Ascending aorta (tissue), 2 donors: ENCODE measurements at regions of chr1 and their contacts with region 1.

Region 1: DNA sequence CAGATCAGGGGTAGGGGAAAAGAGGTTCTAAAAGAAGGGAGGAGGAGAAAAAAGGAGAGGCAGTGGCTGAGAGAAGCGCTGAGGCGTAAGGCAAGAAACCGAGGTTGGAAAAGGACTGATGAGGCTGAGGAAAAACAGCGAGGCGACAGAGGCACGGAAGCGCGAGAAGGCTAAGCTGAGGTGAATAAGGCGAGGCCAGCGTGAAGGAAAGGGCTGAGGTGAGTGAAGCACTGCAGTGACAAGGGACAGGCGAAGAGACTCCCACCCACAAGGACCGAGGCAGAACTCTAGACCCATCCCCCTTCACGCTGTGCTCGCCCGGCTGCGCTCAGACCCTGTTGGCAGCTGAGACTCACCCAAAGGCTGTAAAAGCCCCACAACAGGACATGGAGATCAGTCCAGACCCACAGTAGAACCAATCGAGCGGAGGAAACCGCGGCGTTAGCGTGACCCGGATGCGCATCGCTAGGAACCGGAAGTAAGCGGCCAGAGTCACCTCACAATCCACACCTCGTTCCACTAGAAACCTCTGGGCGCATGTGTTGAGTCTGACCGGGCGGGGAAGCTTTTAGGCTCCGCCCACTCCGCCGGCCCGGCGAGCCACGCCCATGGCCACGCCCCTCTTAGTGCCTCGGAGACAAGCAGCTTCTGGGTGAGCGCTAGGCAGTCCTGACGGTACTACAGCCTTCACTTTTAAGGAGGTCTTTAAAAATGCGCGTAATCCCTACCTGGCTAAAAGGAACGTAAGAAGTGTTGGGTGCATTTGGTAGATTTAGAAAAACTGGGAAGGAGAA is at the start of gene EYA3:
- DNase-seq: peak; percentile 98 to 100
- H3K4me3 ChIP-seq: peak within 1 kb of the TSS; percentile 66 to 86
- H3K27ac ChIP-seq: peak within 1 kb of the TSS; percentile 76 to 91
- H3K4me1 ChIP-seq: peaks cover 7 to 19% of the 10 kb centered on the region in 2 donors
- H3K27me3 ChIP-seq: no peaks in the 10 kb centered on the region
- CTCF ChIP-seq: no peak
- total RNA-seq, gene EYA3: 52.6 TPM

Region 2: DNA sequence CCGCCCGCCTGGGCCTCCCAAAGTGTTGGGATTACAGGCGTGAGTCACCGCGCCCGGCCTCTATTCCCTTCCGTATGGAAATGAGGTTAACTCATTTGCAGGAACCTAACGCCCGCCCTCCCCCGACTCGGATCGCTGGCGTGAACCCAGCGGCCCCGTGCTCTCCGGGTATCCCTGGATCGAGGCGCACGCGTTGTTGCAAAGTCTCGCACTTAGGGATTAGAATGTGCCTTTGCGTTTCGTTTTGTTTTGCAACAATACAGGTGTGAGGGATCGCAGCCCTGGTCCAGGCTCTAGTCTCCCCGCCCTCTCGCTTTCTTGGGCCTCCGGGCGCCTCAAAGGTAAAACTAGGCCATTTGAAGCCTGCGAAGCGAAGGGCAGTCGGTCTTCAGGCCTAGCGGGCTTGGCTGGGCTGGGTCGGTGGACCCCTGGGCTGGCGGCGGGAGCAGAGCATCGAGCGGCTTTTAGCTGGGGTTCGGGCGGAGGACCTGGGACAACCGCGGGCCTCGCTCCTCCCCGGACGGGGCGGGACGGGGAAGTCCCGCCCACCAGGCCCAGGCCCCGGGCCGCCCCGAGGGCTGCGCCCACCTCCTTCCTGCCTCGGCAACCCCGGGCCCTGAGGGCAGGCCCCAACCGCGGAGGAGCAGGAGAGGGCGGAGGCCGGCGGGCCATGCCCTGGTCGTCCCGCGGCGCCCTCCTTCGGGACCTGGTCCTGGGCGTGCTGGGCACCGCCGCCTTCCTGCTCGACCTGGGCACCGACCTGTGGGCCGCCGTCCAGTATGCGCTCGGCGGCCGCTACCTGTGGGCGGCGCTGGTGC is 128.8 kb before region 1 on chr1 and contains the start of gene XKR8:
- intact Hi-C with region 1: loop called (anchors 1 kb)
- DNase-seq: peak; percentile 41 to 88
- H3K4me3 ChIP-seq: peak within 1 kb of the TSS; percentile 68 to 74
- H3K27ac ChIP-seq: peak within 1 kb of the TSS; percentile 87 to 93
- H3K4me1 ChIP-seq: peaks cover 6 to 11% of the 10 kb centered on the region in 2 donors
- H3K27me3 ChIP-seq: no peaks in the 10 kb centered on the region
- CTCF ChIP-seq: peak in 2 of 3 experiments; percentile 39 to 55
- total RNA-seq, gene XKR8: 15.6 TPM

Region 3: GRCh38 chr1:28028873-28029654 is 59.3 kb before region 1 on chr1:
- intact Hi-C with region 1: loop called (anchors 5 kb)
- DNase-seq: no peak
- H3K4me3 ChIP-seq: no peak overlapping the region
- H3K27ac ChIP-seq: peak overlapping the region; percentile 74 to 89
- H3K4me1 ChIP-seq: peaks cover 0 to 25% of the 10 kb centered on the region in 2 donors
- H3K27me3 ChIP-seq: no peaks in the 10 kb centered on the region
- CTCF ChIP-seq: no peak

Region 4: DNA sequence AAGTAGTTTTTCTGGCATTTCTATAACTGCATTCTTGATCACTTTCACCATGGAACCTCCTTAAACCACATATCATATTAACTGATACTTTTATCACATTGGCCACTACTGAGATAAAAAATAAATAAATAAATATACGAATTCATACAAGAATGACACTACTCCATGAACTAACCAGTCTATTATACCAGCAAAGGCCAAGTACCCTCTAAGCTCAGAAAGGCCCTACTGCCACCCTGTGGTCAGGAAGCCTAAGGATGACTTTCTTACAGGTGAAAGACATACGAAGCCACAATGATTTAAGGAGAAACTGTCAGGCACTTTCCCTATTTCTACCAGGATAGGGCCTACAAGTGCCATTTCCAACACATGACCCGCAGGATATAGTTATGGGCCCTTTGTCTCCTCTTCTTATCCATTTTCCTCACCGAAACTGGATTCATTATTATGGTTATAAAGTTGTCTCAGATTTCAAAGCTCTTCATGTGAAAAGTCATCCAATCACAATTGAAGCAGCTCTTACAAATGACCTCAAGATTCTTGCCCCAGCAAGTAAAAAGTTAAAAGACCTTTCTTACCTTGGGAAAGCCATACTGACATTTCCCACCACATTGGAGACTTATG is 120.6 kb after region 1 on chr1:
- intact Hi-C with region 1: loop called (anchors 10 kb)
- DNase-seq: no peak
- H3K4me3 ChIP-seq: no peak overlapping the region
- H3K27ac ChIP-seq: no peak overlapping the region
- H3K4me1 ChIP-seq: no peaks in the 10 kb centered on the region
- H3K27me3 ChIP-seq: no peaks in the 10 kb centered on the region
- CTCF ChIP-seq: peak; percentile 40 to 58 (median 42)